Dorsolateral prefrontal cortex (tissue), 120 donors: ENCODE measurements at regions of chr17 and their contacts with region 1.

Region 1: GRCh38 chr17:43483674-43484372 is at the start of gene DHX8:
- DNase-seq: peak; percentile 92 to 98 (median 96)
- H3K4me3 ChIP-seq: peak within 1 kb of the TSS; percentile 45 to 99 (median 84)
- H3K27ac ChIP-seq: peak within 1 kb of the TSS; percentile 43 to 98 (median 91)
- H3K27me3 ChIP-seq: no peaks in the 10 kb centered on the region
- CTCF ChIP-seq: peak; percentile 100
- total RNA-seq, gene DHX8: 32.7 to 69.3 (median 46.7) TPM

Region 2: DNA sequence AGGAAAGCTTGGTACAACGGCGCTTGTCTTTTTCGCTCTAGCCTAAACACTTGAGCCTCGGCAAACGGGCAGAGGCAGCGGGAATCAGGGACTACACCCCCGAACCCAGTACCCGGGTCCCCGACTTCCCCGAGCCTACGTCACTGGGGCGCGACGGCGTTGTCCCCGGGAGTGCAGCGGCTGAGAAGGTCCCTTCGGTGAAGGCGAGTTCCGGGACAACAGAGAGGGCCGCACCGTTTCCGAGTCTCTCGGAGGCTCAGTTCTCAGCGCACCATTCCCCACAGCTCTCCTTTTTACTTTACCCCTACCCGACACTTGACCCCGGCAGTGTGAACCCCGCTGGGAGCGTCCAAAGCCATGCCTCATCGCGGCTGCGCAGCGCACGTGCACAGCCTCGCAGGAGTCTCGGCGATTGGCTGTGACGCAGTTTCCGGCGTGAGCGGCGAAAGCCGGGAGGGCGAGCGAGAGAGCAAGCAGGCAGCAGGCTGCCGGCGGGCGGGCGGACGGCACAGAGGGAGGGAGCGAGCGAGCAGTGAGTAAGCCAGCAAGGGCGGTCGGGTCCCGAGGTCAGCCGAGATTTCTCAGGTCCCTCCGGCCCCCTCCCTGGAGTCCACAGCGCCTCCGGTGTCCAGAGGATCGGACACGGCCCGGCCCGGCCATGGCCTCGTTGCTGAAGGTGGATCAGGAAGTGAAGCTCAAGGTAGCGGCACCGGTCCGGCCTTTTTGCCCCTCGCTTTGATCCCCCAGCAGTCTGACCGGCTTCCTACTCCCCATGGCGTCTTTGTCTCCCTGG is 650.7 kb before region 1 on chr17 and contains the start of gene PSME3:
- intact Hi-C with region 1: loop called in 1 of 2 experiments (anchors 5 kb)
- DNase-seq: peak; percentile 87 to 95 (median 91)
- H3K4me3 ChIP-seq: peak within 1 kb of the TSS; percentile 71 to 100 (median 96)
- H3K27ac ChIP-seq: peak within 1 kb of the TSS; percentile 47 to 96 (median 86)
- H3K27me3 ChIP-seq: no peaks in the 10 kb centered on the region
- CTCF ChIP-seq: peak in 35 of 56 donors; percentile 3 to 67 (median 30)
- total RNA-seq, gene PSME3: 55.1 to 109 (median 84.1) TPM

Region 3: DNA sequence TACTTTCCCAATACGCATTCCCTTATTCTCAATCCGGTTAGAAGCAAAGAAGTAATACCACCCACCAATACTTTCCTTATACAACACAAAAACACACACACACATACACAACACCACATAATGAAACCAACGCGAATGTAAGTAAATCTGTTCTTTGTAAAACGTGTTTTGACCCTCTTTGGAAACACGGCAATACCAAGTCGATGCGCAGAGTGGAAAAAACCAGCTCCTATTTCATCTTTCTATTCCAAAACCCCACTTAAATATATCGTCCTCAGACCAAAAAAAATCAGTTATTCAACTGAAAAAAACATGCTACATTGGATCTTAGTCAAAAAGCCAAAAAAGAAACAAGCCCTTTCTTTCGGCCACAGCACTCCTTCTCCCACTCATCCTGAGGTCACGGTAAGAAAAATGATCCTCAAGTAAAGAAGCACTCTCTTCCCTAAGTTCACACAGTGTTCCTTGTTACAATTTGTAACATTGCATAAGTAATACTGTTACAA is 116.0 kb before region 1 on chr17:
- intact Hi-C with region 1: loop called in 1 of 2 experiments (anchors 2 kb)
- DNase-seq: peak in 1 of 10 donors; percentile 9
- H3K4me3 ChIP-seq: peak overlapping the region in 58 of 59 donors; percentile 45 to 79 (median 67)
- H3K27ac ChIP-seq: peak overlapping the region; percentile 95 to 100 (median 99)
- H3K27me3 ChIP-seq: no peaks in the 10 kb centered on the region
- CTCF ChIP-seq: peak in 8 of 56 donors; percentile 3 to 19 (median 10)

Region 4: GRCh38 chr17:43388359-43389045 is 95.3 kb before region 1 on chr17:
- intact Hi-C with region 1: loop called (anchors 1 kb)
- DNase-seq: peak; percentile 80 to 96 (median 93)
- H3K4me3 ChIP-seq: peak overlapping the region; percentile 50 to 98 (median 78)
- H3K27ac ChIP-seq: peak overlapping the region; percentile 87 to 100 (median 98)
- H3K27me3 ChIP-seq: no peaks in the 10 kb centered on the region
- CTCF ChIP-seq: peak in 24 of 56 donors; percentile 4 to 48 (median 20)

Region 5: GRCh38 chr17:43393944-43394482 is 89.8 kb before region 1 on chr17:
- intact Hi-C with region 1: loop called (anchors 1 kb)
- DNase-seq: peak; percentile 80 to 96 (median 92)
- H3K4me3 ChIP-seq: peak overlapping the region in 48 of 59 donors; percentile 1 to 63 (median 37)
- H3K27ac ChIP-seq: peak overlapping the region in 55 of 59 donors; percentile 4 to 89 (median 75)
- H3K27me3 ChIP-seq: no peaks in the 10 kb centered on the region
- CTCF ChIP-seq: peak; percentile 93 to 99 (median 97)

Region 6: DNA sequence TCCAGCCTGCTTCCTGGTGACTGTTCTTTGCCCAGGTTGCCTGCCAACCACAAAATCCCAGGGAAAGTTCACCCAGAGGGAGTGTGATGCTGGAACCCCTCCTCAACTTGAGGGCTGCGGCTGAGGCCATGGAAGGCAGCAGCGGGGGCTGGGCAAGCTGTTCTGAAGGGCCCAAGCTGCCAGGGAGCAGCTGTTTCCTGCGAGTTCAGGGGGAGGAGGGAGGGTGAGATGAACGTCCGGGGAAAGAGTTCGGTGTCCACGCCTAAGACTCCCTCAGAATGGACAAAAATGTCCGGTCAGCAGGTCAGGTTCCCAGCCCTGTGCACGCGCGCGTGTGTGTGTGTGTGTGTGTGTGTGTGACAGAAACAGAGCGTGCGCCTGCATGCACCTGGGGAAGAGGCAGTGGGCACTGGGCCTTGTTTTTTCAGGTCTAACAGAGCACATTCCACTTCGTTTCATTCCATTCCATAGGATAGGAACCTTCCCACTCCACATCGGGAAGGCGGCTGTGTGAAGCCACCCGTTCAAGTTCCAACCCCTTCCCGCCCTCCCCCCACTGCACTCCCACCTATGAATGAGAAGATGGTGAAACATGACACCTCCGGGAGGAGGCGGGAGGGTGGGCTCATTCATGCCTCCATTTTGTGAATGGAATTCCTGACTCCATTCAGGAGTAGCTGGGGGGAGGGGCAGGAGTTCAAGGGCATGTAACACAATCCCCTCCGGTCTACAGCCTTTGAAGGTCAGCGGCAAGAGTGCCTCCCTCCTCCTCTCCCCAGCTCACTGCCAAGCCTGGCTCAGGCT is 46.7 kb after region 1 on chr17:
- intact Hi-C with region 1: no loop called
- DNase-seq: peak in 1 of 10 donors; percentile 27
- H3K4me3 ChIP-seq: peak overlapping the region in 1 of 59 donors; percentile 14
- H3K27ac ChIP-seq: no peak overlapping the region
- H3K27me3 ChIP-seq: no peaks in the 10 kb centered on the region
- CTCF ChIP-seq: no peak

Region 7: DNA sequence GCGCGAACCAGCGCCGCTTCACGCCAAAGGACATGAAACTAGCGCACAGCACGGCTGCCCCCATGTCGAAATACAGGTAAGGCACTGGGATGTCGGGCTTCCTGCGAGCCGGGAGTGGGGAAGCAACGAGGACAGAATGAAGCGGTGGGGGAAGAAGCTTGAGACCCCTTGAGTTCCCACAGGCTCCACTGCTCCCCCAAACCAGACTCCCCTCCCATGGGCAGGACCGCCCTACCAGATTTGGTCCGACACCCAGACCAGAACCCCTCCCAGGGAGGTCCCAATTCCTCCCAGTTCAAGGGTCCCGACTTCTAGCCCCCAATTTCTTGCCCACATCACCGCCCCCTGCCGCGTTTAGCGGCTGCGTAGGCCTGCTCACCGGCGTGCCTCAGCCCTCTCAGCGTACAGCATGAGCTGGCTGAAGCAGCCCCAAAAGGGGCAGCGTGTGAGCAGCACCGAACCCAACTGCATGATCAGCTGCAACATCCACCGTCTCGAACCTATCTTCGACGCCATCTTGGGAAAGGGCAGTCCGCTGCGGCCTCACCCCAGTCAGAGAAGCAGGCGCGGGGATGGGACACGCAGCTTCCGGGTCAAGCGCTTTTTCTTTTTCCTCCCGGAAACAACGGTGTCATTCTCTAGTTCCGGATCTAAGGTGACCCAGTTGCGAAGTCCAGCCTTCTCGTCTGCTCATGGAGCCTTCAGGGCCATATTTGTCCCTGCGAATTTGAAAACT is 530.8 kb after region 1 on chr17 and contains the start of gene TMEM101:
- intact Hi-C with region 1: loop called in 1 of 2 experiments (anchors 10 kb)
- DNase-seq: peak; percentile 85 to 94 (median 91)
- H3K4me3 ChIP-seq: peak within 1 kb of the TSS; percentile 62 to 99 (median 91)
- H3K27ac ChIP-seq: peak within 1 kb of the TSS in 57 of 59 donors; percentile 13 to 95 (median 84)
- H3K27me3 ChIP-seq: no peaks in the 10 kb centered on the region
- CTCF ChIP-seq: peak in 43 of 56 donors; percentile 9 to 70 (median 40)
- total RNA-seq, gene TMEM101: 13.5 to 26.7 (median 19.9) TPM